ENCODE measurements at regions of chr2 and their contacts with region 1.

Region 1: DNA sequence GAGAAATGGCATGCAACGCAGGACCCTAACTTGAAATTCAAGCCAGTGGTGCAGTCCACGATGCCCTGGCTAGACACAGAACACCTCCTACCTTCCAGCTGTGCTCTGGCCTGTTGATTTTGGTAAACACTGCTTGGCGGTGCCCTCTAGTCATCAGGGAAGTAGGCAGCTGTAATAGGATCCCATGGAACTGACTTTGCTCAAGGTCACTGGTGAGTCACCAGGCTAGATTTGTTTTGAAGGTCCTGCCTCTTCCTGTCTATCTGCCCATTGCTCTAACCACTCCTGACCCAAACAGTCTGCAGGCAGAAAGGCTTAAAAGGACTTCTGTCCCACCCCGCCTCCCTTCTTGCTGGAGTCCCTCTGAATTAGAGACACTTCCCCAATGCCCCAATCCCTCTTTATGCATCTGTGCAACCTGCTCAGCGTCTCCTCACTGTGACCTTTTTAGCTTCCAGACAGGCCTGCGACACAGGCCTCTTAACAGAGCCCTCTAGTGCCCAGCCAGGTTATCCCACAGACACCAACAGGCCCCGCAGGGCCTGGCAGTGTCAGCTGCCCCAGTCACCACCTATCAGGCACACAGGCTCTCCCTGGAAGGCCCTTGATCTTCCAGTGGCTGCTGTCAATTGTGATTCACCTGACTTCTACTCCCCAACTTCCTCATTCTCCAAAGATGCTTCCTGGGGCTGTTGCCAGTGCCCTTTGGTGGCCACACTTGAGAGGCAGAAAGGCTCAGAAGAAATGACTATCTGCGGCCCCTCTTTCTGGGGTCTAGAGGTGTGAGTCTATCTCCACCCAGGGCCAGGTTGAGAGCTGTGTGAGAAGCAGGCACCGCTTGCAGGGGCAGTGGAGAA is 5.2 kb downstream of the TMEM127 start:
- DNase-seq: peak; percentile 78 to 91 (median 88)
- H3K4me3 ChIP-seq: peak overlapping the region in 2 of 7 experiments; percentile 11 to 29
- H3K27ac ChIP-seq: peak overlapping the region; percentile 8 to 67
- H3K4me1 ChIP-seq: peaks cover 24 to 75% (median 70%) of the 10 kb centered on the region in 4 experiments
- H3K27me3 ChIP-seq: no peaks in the 10 kb centered on the region

Region 2: DNA sequence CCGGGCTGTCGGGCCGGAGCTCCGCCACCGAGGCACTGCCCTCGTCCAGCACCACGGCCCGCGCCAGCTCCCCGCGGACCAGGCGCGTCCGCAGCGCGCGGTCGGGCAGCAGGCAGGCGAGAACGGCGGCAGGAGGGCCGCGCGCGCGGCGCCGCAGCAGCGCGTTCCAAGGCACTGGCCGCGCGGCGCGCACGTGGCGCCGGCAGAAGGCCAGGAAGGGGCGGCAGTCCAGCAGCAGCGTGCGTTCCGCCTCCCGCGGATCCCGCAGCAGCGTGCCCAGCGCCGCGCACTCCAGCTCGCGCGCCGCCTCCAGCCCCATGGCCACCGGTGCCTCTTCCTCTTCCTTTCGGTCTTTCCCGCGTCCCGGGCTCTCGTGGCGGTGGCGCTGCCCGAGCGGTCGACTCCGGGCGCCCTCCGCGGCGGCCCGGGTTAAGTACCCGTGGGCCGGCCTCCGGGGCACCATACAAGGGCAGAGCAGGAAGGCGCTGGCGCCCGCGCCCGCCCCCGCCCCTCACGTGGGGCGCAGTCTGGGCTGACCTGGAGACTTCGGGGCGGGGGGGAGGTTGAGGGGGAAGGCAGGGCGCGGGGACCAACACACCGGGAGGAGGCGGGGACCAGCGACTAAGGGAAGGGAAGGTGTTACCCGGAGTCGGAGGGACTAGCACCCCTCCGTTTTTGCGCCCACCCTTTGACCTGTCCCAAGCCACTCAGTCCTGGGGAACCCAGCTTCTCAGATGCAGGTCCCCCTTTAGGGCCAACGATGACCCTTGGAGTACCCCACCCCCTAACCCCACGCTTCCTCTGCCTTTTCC is 115.4 kb before region 1 on chr2 and contains the start of gene DUSP2:
- CTCF ChIA-PET with region 1: interaction called, 4 read pairs
- POLR2A ChIA-PET with region 1: interaction called, 10 read pairs
- DNase-seq: peak; percentile 84 to 93 (median 88)
- H3K4me3 ChIP-seq: peak within 1 kb of the TSS; percentile 52 to 80 (median 69)
- H3K27ac ChIP-seq: peak within 1 kb of the TSS; percentile 77 to 79
- H3K4me1 ChIP-seq: peaks cover 10 to 71% (median 66%) of the 10 kb centered on the region in 4 experiments
- H3K27me3 ChIP-seq: no peaks in the 10 kb centered on the region

Region 3: GRCh38 chr2:96241900-96242611 is 18.6 kb before region 1 on chr2:
- CTCF ChIA-PET with region 1: interaction called, 23 read pairs
- POLR2A ChIA-PET with region 1: interaction called, 3 read pairs
- DNase-seq: peak; percentile 64 to 80 (median 73)
- H3K4me3 ChIP-seq: peak overlapping the region in 3 of 7 experiments; percentile 21 to 39 (median 37)
- H3K27ac ChIP-seq: peak overlapping the region; percentile 41 to 76
- H3K4me1 ChIP-seq: peaks cover 8 to 33% (median 25%) of the 10 kb centered on the region in 4 experiments
- H3K27me3 ChIP-seq: no peaks in the 10 kb centered on the region

Region 4: GRCh38 chr2:96274355-96275056 is 13.9 kb after region 1 on chr2:
- CTCF ChIA-PET with region 1: no interaction called
- POLR2A ChIA-PET with region 1: no interaction called
- DNase-seq: no peak
- H3K4me3 ChIP-seq: no peak overlapping the region
- H3K27ac ChIP-seq: peak overlapping the region in 1 of 2 experiments; percentile 0
- H3K4me1 ChIP-seq: no peaks in the 10 kb centered on the region
- H3K27me3 ChIP-seq: no peaks in the 10 kb centered on the region

Region 5: GRCh38 chr2:96344011-96344410 is 83.4 kb after region 1 on chr2:
- CTCF ChIA-PET with region 1: no interaction called
- POLR2A ChIA-PET with region 1: no interaction called
- DNase-seq: peak in 2 of 3 donors; percentile 41 to 52
- H3K4me3 ChIP-seq: no peak overlapping the region
- H3K27ac ChIP-seq: no peak overlapping the region
- H3K4me1 ChIP-seq: no peaks in the 10 kb centered on the region
- H3K27me3 ChIP-seq: no peaks in the 10 kb centered on the region